T-cell (primary cell): ENCODE measurements at regions of chr1 and their contacts with region 1.

Region 1: GRCh38 chr1:42681741-42682483 is at the start of gene YBX1:
- DNase-seq: peak; percentile 88 to 98 (median 94)
- ATAC-seq: peak; percentile 90 to 91 (median 91)
- H3K4me3 ChIP-seq: peak within 1 kb of the TSS; percentile 76 to 90
- H3K4me3 Mint-ChIP-seq: peak within 1 kb of the TSS; percentile 97 to 98 (median 98)
- H3K27ac ChIP-seq: peak within 1 kb of the TSS; percentile 67
- H3K27ac Mint-ChIP-seq: peak within 1 kb of the TSS; percentile 96
- H3K4me1 ChIP-seq: peaks cover 15 to 42% of the 10 kb centered on the region in 2 experiments
- H3K4me1 Mint-ChIP-seq: peaks cover 51 to 56% (median 56%) of the 10 kb centered on the region in 3 donors
- H3K27me3 ChIP-seq: no peaks in the 10 kb centered on the region
- H3K27me3 Mint-ChIP-seq: no peaks in the 10 kb centered on the region
- total RNA-seq, gene YBX1: 274 to 340 (median 307) TPM

Region 2: DNA sequence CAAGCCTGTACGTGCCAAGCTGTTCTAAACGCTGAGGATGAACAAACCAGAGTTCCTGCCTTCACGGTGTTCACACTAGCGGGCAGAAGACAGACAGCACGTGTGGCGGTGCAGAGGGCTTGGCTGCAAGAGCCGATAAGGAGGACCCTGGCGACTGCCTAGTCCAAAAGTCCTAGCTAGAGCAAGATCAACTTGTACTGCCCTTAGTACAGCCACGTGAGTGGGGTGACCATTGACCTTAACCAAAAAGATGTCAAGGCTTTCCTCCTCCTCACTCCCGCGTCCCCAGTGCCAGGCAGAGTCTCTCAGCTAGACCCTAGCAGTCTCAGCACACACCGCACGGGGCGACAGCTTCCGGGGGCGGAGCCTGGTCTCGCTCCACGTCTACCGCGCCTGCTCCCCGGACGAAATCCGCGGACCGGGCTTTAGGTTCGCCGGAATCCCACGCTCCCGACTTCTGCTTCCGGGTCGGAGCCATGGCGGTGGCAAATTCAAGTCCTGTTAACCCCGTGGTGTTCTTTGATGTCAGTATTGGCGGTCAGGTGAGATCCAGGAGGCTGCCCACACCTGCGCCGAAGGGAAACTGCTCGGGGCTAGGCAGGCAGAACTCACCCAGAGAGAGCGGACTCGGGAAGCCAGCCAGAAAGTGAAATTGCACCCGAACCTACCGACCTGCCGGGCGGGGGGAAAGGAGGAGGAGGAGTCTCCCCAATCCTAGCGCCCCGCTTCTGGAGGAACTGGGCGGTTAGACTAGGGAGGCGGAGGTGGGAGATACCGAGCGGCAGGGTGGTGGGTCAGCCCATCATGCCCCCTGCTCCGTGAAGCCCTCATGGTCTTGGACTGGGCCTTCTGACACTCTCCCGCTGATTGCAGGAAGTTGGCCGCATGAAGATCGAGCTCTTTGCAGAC is 23.7 kb before region 1 on chr1 and contains the start of gene PPIH:
- CTCF ChIA-PET with region 1: interaction called in 1 of 2 experiments, 4 read pairs
- POLR2A ChIA-PET with region 1: interaction called, 3 to 19 read pairs
- DNase-seq: peak; percentile 84 to 98 (median 93)
- ATAC-seq: peak; percentile 98 to 99 (median 99)
- H3K4me3 ChIP-seq: peak within 1 kb of the TSS; percentile 68 to 72
- H3K4me3 Mint-ChIP-seq: peak within 1 kb of the TSS; percentile 97 to 100 (median 99)
- H3K27ac ChIP-seq: peak within 1 kb of the TSS; percentile 77
- H3K27ac Mint-ChIP-seq: peak within 1 kb of the TSS; percentile 94 to 95
- H3K4me1 ChIP-seq: peaks cover 17 to 20% of the 10 kb centered on the region in 2 experiments
- H3K4me1 Mint-ChIP-seq: peaks cover 43 to 48% (median 44%) of the 10 kb centered on the region in 3 donors
- H3K27me3 ChIP-seq: no peaks in the 10 kb centered on the region
- H3K27me3 Mint-ChIP-seq: no peaks in the 10 kb centered on the region
- total RNA-seq, gene PPIH: 37.4 to 43.1 (median 41.3) TPM

Region 3: GRCh38 chr1:42993631-42994121 is 311.8 kb after region 1 on chr1:
- CTCF ChIA-PET with region 1: no interaction called
- POLR2A ChIA-PET with region 1: no interaction called
- DNase-seq: peak in 1 of 35 experiments; percentile 6
- ATAC-seq: no peak
- H3K4me3 ChIP-seq: no peak overlapping the region
- H3K4me3 Mint-ChIP-seq: no peak overlapping the region
- H3K27ac ChIP-seq: no peak overlapping the region
- H3K27ac Mint-ChIP-seq: no peak overlapping the region
- H3K4me1 ChIP-seq: no peaks in the 10 kb centered on the region
- H3K4me1 Mint-ChIP-seq: peaks cover 0 to 3% (median 0%) of the 10 kb centered on the region in 3 donors
- H3K27me3 ChIP-seq: no peaks in the 10 kb centered on the region
- H3K27me3 Mint-ChIP-seq: no peaks in the 10 kb centered on the region